SK-N-SH (cell line): ENCODE measurements at regions of chr1 and their contacts with region 1.

Region 1: DNA sequence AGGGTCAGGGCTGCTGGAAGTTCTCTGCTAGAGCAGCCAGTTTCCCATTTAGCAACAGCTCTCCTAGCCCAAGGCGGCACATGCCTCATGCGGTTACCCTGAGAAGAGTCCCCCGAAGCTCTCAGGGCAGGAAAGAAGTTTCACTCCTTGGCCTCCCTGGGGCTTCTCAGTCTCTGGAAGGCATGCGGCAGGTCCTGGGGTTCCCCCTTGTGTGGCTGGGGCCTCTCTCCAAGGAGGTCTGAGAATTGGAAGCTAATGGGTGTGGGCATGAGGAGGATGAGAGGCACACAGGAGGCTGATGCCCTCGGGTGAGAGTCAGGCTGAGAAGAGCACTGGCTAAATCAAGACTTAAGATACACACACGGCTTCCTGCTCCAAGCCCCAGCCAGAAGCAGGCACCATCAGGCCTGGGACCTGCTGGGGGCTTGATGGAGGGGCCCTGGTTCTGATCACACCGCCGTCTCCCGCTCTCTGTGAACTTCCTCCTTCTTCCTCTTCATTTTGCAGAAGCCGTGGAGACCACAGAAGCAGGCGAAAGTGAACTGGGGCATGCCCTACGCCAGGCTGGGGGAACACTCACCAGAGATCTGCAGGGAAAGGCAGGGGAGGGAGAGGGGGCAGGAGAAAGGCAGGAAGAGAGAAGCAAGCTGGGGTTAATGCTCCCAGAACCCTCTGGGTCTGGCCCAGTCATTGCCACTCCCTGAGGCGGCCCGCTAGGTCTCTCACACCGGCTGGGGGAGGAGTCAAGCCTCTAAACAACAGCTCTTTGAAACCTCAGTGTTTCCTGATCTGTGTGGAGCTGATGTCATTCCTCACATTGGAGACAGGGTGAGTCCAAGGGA is 15.1 kb downstream of the BLACAT1 start:
- DNase-seq: no peak
- H3K4me3 ChIP-seq: no peak overlapping the region
- H3K27ac ChIP-seq: no peak overlapping the region
- H3K4me1 ChIP-seq: peaks cover 3 to 5% of the 10 kb centered on the region in 2 experiments; a peak in 2 of 4 replicates
- H3K27me3 ChIP-seq: peaks cover 40% of the 10 kb centered on the region; the same call in 1 of the 2 replicates
- CTCF ChIP-seq: no peak
- EP300 ChIP-seq: no peak
- RAD21 ChIP-seq: no peak

Region 2: GRCh38 chr1:205422993-205423625 is 17.6 kb before region 1 on chr1:
- CTCF ChIA-PET with region 1: interaction called, 11 read pairs
- POLR2A ChIA-PET with region 1: no interaction called
- DNase-seq: no peak
- H3K4me3 ChIP-seq: no peak overlapping the region
- H3K27ac ChIP-seq: no peak overlapping the region
- H3K4me1 ChIP-seq: peaks cover 0 to 11% of the 10 kb centered on the region in 2 experiments; a peak in 2 of 4 replicates
- H3K27me3 ChIP-seq: peaks cover 34% of the 10 kb centered on the region
- CTCF ChIP-seq: no peak
- EP300 ChIP-seq: no peak
- RAD21 ChIP-seq: peak; percentile 22; the same call in 1 of the 2 replicates